ENCODE measurements at regions of chr7 and their contacts with region 1.

Region 1: DNA sequence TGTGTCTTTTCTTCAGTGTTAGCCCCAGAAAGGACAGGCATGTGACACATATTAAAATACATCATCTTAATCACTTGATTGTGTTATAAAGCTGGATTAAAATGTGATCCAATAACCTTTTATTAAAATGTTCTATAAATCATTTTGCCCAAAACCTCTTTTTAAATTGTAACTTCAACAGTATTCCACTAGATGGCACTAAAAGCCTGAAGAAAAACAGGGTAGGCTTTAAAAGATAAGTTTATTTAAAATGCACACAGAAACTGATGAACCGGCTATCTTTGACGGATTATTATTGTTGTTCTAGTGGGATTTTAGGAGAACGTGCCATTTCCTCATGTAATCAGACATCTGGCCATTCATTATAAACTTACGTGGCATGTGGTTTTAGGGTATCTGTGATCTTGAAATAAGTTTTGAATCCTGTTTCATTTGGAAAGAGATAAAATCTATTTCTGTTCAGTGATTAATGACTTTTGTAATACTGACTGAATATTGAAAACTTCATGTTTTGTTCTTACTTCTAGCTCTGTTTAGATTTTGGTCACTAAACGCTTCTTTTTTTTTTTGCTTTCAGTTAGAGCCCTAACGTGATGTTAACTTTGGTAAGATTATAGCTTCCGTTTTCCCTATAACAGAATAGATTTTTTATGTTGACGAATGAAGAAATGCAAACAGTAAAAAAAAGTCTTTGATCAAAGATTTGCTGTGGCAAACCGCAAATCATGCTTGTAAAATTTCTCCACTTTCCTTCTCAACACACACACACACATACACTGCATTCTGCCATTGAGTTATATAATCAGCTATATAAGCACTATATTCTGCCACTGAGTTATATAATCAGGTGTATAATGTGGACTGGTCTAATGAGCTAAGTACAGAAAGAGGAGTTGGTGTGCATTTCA is 13.6 kb downstream of the VPS50 start:
- DNase-seq: no peak
- ATAC-seq: no peak
- H3K4me3 ChIP-seq: no peak overlapping the region
- H3K27ac ChIP-seq: no peak overlapping the region
- H3K4me1 ChIP-seq: no peaks in the 10 kb centered on the region
- H3K27me3 ChIP-seq: no peaks in the 10 kb centered on the region
- CTCF ChIP-seq: peak; percentile 35 to 70 (median 63); a peak in 5 of 6 replicates
- POLR2A ChIP-seq: no peak
- RAD21 ChIP-seq: peak; percentile 72

Region 2: DNA sequence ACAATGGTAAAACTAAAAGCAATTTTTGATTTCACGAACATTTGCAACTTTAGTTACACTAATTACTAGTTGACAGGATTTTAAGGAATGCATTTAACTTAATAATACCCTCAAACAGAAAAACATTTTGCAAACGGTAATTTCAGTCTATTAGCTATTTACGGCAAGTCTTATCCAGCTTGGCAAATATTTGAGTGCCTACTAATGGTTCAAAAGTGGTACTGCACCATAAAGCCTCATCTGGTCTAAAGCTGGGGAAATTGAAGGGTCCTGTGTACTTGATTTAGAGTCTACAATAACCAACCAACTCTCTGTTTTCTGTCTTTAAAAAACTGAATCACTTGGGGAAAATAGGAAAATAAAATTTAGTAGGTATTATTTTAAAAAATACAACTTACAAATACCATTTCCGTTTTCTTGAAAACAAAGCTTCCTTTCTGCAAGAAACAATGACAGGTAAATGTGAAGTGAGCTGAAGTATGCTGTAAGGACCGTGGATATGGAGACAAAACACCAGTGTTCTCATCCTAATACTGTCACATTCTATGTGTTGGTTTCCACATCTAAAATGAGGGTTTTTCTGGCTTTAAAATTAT is 128.7 kb after region 1 on chr7:
- CTCF ChIA-PET with region 1: interaction called, 17 read pairs
- POLR2A ChIA-PET with region 1: no interaction called
- RAD21 ChIA-PET with region 1: interaction called in 1 of 2 experiments, 3 read pairs
- intact Hi-C with region 1: loop called (anchors 5 kb)
- DNase-seq: peak; percentile 24
- ATAC-seq: peak; percentile 79
- H3K4me3 ChIP-seq: no peak overlapping the region
- H3K27ac ChIP-seq: no peak overlapping the region
- H3K4me1 ChIP-seq: no peaks in the 10 kb centered on the region
- H3K27me3 ChIP-seq: no peaks in the 10 kb centered on the region
- CTCF ChIP-seq: peak in 2 of 3 experiments; percentile 78 to 87; a peak in 4 of 6 replicates
- POLR2A ChIP-seq: no peak
- RAD21 ChIP-seq: peak; percentile 60

Region 3: DNA sequence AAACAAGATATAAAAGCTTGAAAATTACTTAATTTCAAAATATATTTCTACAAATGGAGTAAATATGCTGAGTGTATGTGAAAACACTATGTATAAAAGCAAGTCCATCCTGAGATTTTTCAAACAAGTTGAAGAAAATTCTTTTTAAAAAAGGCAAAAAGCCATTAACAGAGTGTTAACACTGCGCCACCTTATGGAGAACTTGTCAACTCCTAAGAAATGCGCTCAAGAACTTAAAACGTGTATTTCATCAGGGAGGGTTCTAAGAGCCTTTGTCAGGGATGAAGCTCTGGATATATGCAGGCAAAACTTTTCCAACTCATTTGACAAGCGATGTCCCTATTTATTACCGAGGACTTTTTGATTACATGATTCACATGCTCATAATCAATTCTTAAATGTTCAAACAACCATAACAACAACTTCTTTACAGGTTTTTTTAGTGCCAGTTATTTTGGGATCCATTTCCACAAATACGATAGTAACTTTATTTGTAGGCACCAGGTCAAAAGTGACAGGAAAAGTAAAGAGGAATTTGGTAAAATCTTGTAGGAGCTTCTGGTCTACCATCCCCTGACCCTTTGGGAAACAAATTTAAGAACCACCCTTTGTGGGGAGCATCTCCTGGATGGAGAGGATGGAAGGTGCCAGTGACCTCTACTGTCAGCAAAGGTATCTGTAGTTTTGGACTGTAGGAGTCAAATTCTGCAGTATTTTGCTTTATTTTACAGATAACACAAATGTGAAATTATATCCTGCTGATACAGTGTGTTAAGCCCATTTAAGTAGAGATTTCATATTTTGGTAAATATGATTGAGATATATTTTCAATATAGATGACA is 305.5 kb after region 1 on chr7:
- CTCF ChIA-PET with region 1: interaction called, 12 read pairs
- POLR2A ChIA-PET with region 1: no interaction called
- RAD21 ChIA-PET with region 1: no interaction called
- intact Hi-C with region 1: loop called (anchors 1 kb)
- DNase-seq: peak; percentile 49
- ATAC-seq: peak; percentile 76
- H3K4me3 ChIP-seq: no peak overlapping the region
- H3K27ac ChIP-seq: no peak overlapping the region
- H3K4me1 ChIP-seq: no peaks in the 10 kb centered on the region
- H3K27me3 ChIP-seq: no peaks in the 10 kb centered on the region; the same call in 1 of the 2 replicates
- CTCF ChIP-seq: peak; percentile 52 to 71 (median 67); a peak in 5 of 6 replicates
- POLR2A ChIP-seq: no peak
- RAD21 ChIP-seq: peak; percentile 68

Region 4: GRCh38 chr7:94223375-94224070 is 977.7 kb after region 1 on chr7:
- CTCF ChIA-PET with region 1: no interaction called
- POLR2A ChIA-PET with region 1: no interaction called
- RAD21 ChIA-PET with region 1: no interaction called
- intact Hi-C with region 1: loop called (anchors 5 kb)
- DNase-seq: peak; percentile 41
- ATAC-seq: peak; percentile 80
- H3K4me3 ChIP-seq: 0 out of 4 replicates have a peak overlapping the region, but pooled peaks of 1 of the 2 experiments have one; percentile 1
- H3K27ac ChIP-seq: no peak overlapping the region
- H3K4me1 ChIP-seq: peaks cover 0 to 9% of the 10 kb centered on the region in 2 experiments; a peak in 1 of 4 replicates
- H3K27me3 ChIP-seq: no peaks in the 10 kb centered on the region
- CTCF ChIP-seq: peak; percentile 35 to 52 (median 50); a peak in 4 of 6 replicates
- POLR2A ChIP-seq: no peak
- RAD21 ChIP-seq: peak; percentile 65

Region 5: DNA sequence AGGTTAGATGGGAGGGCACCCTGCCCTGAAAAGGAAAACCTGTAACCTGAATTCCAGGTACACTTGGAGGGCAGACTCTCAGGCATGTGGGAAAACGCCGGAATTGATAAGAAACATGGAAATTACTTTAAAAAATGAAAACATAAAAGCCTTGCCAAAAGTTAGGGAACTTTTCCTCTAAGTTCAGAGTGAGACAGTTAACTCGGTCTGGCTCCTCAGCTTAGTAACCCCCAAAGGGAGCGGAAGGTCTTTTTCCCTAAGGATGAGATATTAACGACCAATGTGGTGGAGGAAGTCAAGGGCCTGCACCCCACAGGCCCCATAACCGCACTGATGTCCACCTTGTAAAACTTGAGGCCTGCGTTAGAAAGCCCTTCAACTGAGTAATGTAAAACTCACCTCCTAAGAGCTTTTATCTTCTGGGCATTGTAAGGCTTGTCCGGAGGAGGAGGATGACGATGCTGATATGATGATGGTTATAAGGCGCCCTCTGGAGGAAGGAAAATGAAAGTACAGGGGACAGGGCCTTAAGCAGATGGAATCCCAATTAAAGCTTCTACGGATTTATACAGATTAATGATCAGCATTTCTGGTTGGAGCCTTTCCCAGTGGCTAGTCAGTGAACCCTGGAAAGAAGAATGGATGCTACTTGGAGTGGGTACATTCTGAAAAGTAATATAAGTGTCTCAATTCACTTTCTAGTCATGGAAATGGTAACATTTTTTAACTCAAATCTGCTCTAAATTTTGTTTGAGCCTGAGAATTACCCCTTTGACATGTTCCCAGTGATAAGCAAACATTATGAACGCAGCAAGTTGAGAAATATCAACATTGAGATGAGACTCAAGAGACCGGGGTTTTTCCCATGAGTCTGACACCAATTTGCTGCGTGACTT is 1149.6 kb after region 1 on chr7:
- CTCF ChIA-PET with region 1: no interaction called
- POLR2A ChIA-PET with region 1: no interaction called
- RAD21 ChIA-PET with region 1: no interaction called
- intact Hi-C with region 1: loop called (anchors 5 kb)
- DNase-seq: peak; percentile 59
- ATAC-seq: peak; percentile 96
- H3K4me3 ChIP-seq: no peak overlapping the region
- H3K27ac ChIP-seq: no peak overlapping the region
- H3K4me1 ChIP-seq: no peaks in the 10 kb centered on the region
- H3K27me3 ChIP-seq: no peaks in the 10 kb centered on the region
- CTCF ChIP-seq: peak; percentile 64 to 81 (median 78)
- POLR2A ChIP-seq: no peak
- RAD21 ChIP-seq: peak; percentile 87